ENCODE measurements at regions of chr6 and their contacts with region 1.

Region 1: DNA sequence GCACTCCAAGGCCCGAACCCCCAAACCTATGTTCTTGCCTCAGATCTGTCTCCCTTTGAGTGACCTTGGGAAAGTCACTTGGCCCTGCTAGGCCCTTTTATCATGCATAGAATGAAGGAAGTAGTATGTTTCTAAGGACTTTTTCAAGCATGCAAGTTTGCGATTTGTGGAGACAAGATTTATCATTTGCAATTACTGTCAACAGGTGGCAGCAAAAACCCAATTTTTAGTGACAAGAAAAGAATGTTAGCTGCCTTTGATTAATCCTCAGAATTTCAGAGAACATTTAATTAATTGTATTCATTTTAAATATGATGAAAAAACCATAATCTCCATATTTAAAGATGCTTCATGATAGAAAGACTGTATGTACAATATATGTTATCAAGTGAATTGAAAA is 28.3 kb upstream of the PREP start:
- DNase-seq: no peak
- H3K4me3 ChIP-seq: no peak overlapping the region
- H3K27ac ChIP-seq: no peak overlapping the region
- H3K4me1 ChIP-seq: no peaks in the 10 kb centered on the region
- H3K27me3 ChIP-seq: no peaks in the 10 kb centered on the region
- CTCF ChIP-seq: peak in 3 of 4 experiments; percentile 48 to 67 (median 66)
- POLR2A ChIP-seq: no peak

Region 2: GRCh38 chr6:105402939-105403935 is 28.0 kb before region 1 on chr6 and contains the start of gene PREP:
- intact Hi-C with region 1: no loop called
- DNase-seq: peak; percentile 83
- H3K4me3 ChIP-seq: peak within 1 kb of the TSS; percentile 81 to 86
- H3K27ac ChIP-seq: peak within 1 kb of the TSS; percentile 61 to 72
- H3K4me1 ChIP-seq: no peaks in the 10 kb centered on the region
- H3K27me3 ChIP-seq: no peaks in the 10 kb centered on the region
- CTCF ChIP-seq: peak; percentile 42 to 71 (median 59)
- POLR2A ChIP-seq: peak; percentile 55
- total RNA-seq, gene PREP: 8.9 to 54.5 TPM

Region 3: GRCh38 chr6:105601541-105602236 is 170.5 kb after region 1 on chr6:
- intact Hi-C with region 1: no loop called
- DNase-seq: peak; percentile 79
- H3K4me3 ChIP-seq: no peak overlapping the region
- H3K27ac ChIP-seq: peak overlapping the region; percentile 36 to 52
- H3K4me1 ChIP-seq: peaks cover 7% of the 10 kb centered on the region
- H3K27me3 ChIP-seq: no peaks in the 10 kb centered on the region
- CTCF ChIP-seq: no peak
- POLR2A ChIP-seq: no peak

Region 4: GRCh38 chr6:106141441-106142237 is 710.4 kb after region 1 on chr6:
- intact Hi-C with region 1: no loop called
- DNase-seq: no peak
- H3K4me3 ChIP-seq: no peak overlapping the region
- H3K27ac ChIP-seq: no peak overlapping the region
- H3K4me1 ChIP-seq: no peaks in the 10 kb centered on the region
- H3K27me3 ChIP-seq: no peaks in the 10 kb centered on the region
- CTCF ChIP-seq: no peak
- POLR2A ChIP-seq: no peak

Region 5: DNA sequence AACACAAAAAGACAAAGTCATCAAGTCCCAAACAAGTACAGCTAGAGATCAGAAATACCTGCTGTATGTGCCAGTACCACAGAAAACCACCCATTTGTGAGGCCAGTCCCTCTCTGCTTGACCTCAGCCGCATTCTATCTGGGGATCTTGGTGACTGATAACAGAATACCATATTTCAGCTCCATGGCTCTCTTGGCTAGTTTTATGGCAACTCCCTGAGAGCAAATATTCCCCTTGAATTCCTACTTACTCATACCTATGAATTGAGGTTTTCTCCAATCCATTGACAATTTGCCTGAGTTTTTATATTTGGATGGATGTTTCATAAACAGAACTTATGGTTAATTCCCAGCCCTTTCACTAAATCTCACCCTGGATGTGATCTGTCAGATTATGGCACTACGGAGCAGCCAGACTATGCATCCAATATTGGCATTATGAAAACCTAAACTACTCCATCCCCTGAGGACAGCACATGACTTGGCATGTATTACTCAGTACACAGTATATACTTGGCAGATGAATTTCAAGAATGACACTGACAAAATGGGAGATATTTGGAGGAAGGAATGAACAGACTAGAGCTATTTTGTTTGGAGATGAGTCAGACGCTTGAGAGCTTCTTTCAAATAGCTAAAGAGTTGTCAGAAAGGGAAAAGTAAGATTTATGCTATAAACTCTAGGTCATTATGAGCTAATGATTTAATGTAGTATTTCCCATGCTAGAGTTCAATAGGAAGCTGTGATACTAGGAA is 750.6 kb after region 1 on chr6:
- intact Hi-C with region 1: no loop called
- DNase-seq: no peak
- H3K4me3 ChIP-seq: no peak overlapping the region
- H3K27ac ChIP-seq: no peak overlapping the region
- H3K4me1 ChIP-seq: no peaks in the 10 kb centered on the region
- H3K27me3 ChIP-seq: no peaks in the 10 kb centered on the region
- CTCF ChIP-seq: no peak
- POLR2A ChIP-seq: no peak

Region 6: DNA sequence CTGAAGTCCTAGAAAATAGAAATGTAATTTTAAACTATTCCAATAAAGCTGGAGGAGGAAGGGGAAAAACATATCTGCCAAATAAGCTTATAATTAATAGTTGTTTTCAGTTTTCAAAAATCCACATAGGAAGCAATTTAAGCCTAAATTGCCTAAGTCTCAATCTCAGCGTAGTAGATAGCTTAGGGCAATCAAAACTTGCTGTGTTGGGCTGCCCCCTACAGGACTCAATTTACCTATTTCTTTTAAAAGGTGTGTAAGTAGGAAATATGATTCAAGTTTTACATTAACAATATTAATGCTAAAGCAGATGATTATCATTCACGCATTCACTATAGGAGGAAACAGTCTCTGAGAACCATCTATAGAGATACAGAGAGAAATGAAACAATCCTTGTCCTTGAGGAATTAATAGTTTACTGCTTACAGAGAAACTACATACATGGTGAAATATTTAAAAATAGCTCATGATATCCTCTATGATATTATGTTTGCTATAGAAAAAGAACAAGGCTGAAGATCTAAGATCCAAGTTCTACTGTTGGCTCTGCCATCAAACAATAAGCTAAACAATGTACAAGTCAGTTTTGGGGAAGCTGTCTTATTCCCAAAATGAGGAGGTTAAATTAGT is 792.2 kb after region 1 on chr6:
- intact Hi-C with region 1: loop called (anchors 10 kb)
- DNase-seq: peak; percentile 21
- H3K4me3 ChIP-seq: no peak overlapping the region
- H3K27ac ChIP-seq: no peak overlapping the region
- H3K4me1 ChIP-seq: no peaks in the 10 kb centered on the region
- H3K27me3 ChIP-seq: no peaks in the 10 kb centered on the region
- CTCF ChIP-seq: peak; percentile 15 to 71 (median 40)
- POLR2A ChIP-seq: no peak

Region 7: GRCh38 chr6:106300944-106301343 is 869.7 kb after region 1 on chr6:
- intact Hi-C with region 1: loop called (anchors 5 kb)
- DNase-seq: no peak
- H3K4me3 ChIP-seq: no peak overlapping the region
- H3K27ac ChIP-seq: no peak overlapping the region
- H3K4me1 ChIP-seq: no peaks in the 10 kb centered on the region
- H3K27me3 ChIP-seq: no peaks in the 10 kb centered on the region
- CTCF ChIP-seq: peak in 3 of 4 experiments; percentile 55 to 66 (median 62)
- POLR2A ChIP-seq: no peak

Measured in prostate gland (tissue), 2 donors.